OCI-LY7 (cell line): ENCODE measurements at regions of chr6 and their contacts with region 1.

Region 1: GRCh38 chr6:50816115-50816675 is 2.5 kb upstream of the TFAP2B start:
- DNase-seq: peak; percentile 68
- H3K4me3 ChIP-seq: peak overlapping the region; percentile 59
- H3K27ac ChIP-seq: no peak overlapping the region
- H3K4me1 ChIP-seq: no peaks in the 10 kb centered on the region
- CTCF ChIP-seq: peak; percentile 95

Region 2: DNA sequence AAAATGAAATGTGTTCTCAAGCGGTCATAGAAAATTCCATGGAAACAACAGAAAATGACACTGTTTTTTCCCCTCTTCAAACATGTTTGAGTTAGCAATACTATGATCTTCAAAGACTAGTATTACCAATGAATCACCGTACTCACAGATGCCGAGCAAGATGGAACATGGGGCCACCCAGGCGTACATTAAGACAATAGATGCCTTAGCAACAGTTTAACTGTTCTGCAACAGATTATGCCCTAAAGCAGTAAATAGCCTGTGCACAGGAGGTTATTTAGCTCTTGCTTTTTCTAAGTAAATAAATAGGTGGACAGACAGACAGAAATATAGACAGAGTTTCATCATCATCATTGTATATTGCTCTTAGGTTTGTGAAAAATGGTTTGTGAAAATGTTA is 482.5 kb before region 1 on chr6:
- CTCF ChIA-PET with region 1: no interaction called
- POLR2A ChIA-PET with region 1: no interaction called
- intact Hi-C with region 1: no loop called
- DNase-seq: no peak
- H3K4me3 ChIP-seq: no peak overlapping the region
- H3K27ac ChIP-seq: no peak overlapping the region
- H3K4me1 ChIP-seq: no peaks in the 10 kb centered on the region
- CTCF ChIP-seq: no peak

Region 3: GRCh38 chr6:51350308-51350904 is 534.2 kb after region 1 on chr6:
- CTCF ChIA-PET with region 1: no interaction called
- POLR2A ChIA-PET with region 1: no interaction called
- intact Hi-C with region 1: loop called (anchors 2 kb)
- DNase-seq: peak; percentile 6
- H3K4me3 ChIP-seq: no peak overlapping the region
- H3K27ac ChIP-seq: no peak overlapping the region
- H3K4me1 ChIP-seq: no peaks in the 10 kb centered on the region
- CTCF ChIP-seq: peak; percentile 74

Region 4: DNA sequence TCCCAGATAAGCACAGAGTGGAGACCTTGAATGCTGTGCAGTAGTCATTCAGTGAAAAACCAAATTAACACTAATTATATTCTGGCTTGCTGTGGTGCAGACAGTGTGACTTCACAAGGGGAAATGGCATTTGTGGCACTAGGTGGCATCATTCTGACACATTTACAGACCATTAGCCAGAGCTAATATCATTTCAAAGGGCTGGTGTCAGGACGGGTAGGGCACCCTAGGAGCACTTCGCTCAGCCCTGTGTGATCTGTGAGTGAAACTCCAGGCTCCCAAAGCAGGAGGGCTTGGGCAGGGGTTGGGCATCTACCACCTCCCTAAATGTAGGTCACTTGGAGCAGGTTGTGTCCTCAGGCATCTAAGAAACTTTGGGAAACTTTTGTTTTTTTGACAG is 715.4 kb after region 1 on chr6:
- CTCF ChIA-PET with region 1: no interaction called
- POLR2A ChIA-PET with region 1: no interaction called
- intact Hi-C with region 1: loop called (anchors 10 kb)
- DNase-seq: no peak
- H3K4me3 ChIP-seq: no peak overlapping the region
- H3K27ac ChIP-seq: no peak overlapping the region
- H3K4me1 ChIP-seq: no peaks in the 10 kb centered on the region
- CTCF ChIP-seq: peak; percentile 41; the same call in 1 of the 2 replicates

Region 5: DNA sequence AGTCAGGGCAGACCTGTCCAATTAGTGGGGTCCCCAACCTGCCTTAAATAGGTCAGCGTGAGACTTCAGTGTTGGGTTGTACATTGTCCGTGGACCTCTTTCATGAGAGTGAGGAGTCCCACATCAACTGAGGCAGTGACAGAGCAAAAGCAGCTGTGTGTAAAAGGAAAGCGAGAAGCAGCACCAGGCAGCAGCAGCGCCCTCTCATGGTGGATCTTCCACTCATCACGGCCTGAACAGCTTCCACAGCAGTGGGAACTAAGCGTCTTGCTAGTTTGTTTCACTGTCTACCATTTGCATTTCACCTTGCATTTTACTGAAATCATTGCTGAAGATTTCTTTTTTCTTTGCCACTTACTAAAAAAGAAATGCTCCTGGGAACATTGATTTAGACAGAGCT is 937.4 kb after region 1 on chr6:
- CTCF ChIA-PET with region 1: no interaction called
- POLR2A ChIA-PET with region 1: no interaction called
- intact Hi-C with region 1: loop called (anchors 5 kb)
- DNase-seq: peak; percentile 4
- H3K4me3 ChIP-seq: no peak overlapping the region
- H3K27ac ChIP-seq: no peak overlapping the region
- H3K4me1 ChIP-seq: no peaks in the 10 kb centered on the region
- CTCF ChIP-seq: peak; percentile 71

Region 6: GRCh38 chr6:51855310-51856082 is 1039.3 kb after region 1 on chr6:
- CTCF ChIA-PET with region 1: no interaction called
- POLR2A ChIA-PET with region 1: no interaction called
- intact Hi-C with region 1: loop called (anchors 10 kb)
- DNase-seq: peak; percentile 79
- H3K4me3 ChIP-seq: no peak overlapping the region
- H3K27ac ChIP-seq: no peak overlapping the region
- H3K4me1 ChIP-seq: no peaks in the 10 kb centered on the region
- CTCF ChIP-seq: peak; percentile 95

Region 7: DNA sequence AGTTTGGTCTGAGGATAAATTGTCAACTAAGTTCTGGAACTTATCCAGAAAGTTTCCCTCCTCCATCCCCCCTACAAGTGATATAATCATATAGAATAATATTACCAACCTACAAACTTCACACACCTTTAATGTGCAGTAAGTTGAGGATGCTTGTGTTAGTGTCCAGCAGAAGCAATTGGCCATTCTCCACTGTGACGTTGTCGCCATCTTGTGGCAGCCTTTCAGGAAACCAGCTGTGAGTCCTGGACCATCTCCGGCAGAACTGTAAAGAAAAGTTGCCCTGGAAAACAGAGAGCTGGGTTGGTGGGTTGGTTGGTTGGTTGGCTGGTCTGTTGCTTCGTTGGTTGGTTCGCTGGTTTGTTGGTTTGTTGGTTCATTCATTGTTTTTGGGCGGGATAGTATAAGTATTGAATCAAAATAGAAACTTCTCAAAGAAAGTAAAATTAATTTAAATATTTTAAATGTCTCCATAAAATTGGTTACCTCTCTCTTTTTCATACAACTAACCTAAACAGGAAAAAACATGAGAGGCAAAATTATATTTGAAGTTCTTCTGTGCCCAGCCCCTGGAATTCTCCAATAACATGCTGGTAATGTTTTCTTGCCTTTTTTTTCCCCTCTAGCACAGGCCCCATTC is 1143.7 kb after region 1 on chr6:
- CTCF ChIA-PET with region 1: no interaction called
- POLR2A ChIA-PET with region 1: no interaction called
- intact Hi-C with region 1: loop called (anchors 5 kb)
- DNase-seq: peak; percentile 55
- H3K4me3 ChIP-seq: no peak overlapping the region
- H3K27ac ChIP-seq: no peak overlapping the region
- H3K4me1 ChIP-seq: no peaks in the 10 kb centered on the region
- CTCF ChIP-seq: peak; percentile 91

Region 8: DNA sequence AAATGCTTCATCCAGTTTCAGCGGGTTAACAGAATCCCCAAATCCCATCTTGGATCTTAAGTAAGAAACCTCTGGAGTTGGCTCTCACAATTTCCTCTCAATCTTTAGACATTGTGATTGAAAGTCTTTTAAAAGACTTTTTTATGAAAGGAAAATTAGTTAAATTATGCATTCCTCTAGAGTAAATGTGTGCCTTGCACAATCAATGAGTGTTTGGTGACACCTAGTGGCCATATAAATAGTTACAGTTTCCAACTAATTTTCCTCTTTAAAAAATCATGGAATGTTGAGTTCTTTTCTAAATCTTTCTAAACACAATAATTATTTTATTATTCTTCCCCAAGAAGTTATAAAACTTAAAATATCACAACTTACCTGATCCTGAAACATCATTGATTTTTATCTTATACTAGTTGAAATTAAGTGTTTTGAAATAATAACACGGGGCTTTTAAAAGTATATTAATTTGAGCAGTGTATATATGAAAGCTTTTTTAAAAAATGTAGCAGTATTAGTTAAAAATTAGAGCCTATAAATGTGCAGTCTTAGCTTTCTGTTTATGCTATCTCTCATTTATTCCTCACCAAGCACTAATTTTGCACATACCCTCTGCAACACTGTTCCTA is 1204.9 kb after region 1 on chr6:
- CTCF ChIA-PET with region 1: no interaction called
- POLR2A ChIA-PET with region 1: no interaction called
- intact Hi-C with region 1: loop called (anchors 5 kb)
- DNase-seq: peak; percentile 53
- H3K4me3 ChIP-seq: no peak overlapping the region
- H3K27ac ChIP-seq: no peak overlapping the region
- H3K4me1 ChIP-seq: no peaks in the 10 kb centered on the region
- CTCF ChIP-seq: peak; percentile 97